Activated CD8-positive, alpha-beta T cell treated with anti-CD3 and anti-CD28 coated beads, Interleukin-2, amount 10 ng/mL, durations not matched to agents 7 days and 5 days (primary cell): ENCODE measurements at regions of chr7 and their contacts with region 1.

Region 1: DNA sequence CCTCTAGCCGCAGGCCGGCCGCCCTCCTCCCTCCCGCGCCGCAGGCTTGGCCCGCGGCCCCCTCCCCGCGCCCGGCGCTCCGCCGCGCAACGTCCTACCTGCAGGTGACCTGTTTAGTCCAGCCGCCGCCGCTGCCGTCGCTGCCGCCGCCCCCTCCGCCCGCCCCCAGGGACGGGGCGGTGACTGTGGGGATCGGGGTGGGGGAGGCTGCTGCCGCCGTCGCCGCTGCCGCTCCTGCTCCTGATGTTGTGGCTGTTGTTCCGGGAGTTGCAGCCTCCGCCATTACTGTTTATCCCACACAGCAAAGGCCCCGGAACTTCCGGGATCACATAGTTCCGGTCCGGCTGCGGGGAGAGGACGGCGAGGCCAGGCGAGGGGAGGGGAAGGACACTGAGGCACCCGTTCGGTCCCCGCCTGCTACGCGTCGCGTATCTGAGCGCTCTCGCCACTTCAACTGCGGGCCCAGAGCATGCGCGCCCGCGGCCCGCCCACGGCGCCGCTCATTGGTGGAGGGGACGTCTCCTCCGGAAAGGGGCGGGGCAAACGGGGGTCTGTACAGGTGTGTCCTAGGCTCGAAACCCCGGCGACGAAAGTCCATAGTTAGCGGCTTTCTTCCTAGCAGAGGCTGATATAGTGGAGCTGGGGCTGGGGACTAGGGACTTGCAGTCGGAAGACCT is at the start of gene MKRN1:
- DNase-seq: peak; percentile 93
- ATAC-seq: peak; percentile 93
- H3K4me3 Mint-ChIP-seq: peak within 1 kb of the TSS; percentile 98
- H3K27ac Mint-ChIP-seq: peak within 1 kb of the TSS; percentile 98
- H3K4me1 Mint-ChIP-seq: peaks cover 32% of the 10 kb centered on the region
- H3K27me3 Mint-ChIP-seq: peaks cover 10% of the 10 kb centered on the region
- total RNA-seq, gene MKRN1: 51.5 to 53.9 TPM

Region 2: DNA sequence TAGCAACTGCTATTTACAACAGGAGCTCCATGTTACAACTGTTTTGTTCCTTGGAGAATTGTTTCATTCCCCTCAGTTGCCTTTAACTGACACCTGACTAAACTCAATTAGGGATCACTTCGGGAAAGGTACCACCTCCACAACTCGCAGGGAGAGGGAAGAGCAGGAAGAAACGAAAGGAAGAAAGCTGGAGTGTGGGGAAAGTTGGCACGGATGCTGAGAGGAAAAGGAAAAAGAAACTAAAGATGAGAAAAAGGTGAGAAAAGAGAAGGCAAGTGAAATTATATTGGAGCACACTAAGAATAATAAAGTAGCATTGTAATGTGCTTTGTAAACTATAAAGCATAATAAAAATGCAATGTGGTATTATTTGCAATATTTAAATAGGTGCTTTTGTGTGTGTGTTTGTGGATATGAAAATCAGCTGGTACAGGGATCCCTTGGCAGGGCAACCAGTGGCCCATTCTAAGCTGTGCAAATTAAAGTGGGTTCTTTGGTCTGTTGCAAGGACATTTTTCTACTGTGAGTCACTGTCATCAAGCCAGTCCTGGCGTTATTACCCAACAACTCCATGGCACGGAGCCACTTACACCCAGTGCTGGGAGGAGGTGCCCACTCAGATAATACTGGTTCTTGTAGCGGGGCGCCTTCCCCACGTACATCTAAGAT is 747.3 kb before region 1 on chr7:
- CTCF ChIA-PET with region 1: no interaction called
- POLR2A ChIA-PET with region 1: no interaction called
- DNase-seq: no peak
- ATAC-seq: no peak
- H3K4me3 Mint-ChIP-seq: no peak overlapping the region
- H3K27ac Mint-ChIP-seq: no peak overlapping the region
- H3K4me1 Mint-ChIP-seq: peaks cover 31% of the 10 kb centered on the region
- H3K27me3 Mint-ChIP-seq: no peaks in the 10 kb centered on the region

Region 3: DNA sequence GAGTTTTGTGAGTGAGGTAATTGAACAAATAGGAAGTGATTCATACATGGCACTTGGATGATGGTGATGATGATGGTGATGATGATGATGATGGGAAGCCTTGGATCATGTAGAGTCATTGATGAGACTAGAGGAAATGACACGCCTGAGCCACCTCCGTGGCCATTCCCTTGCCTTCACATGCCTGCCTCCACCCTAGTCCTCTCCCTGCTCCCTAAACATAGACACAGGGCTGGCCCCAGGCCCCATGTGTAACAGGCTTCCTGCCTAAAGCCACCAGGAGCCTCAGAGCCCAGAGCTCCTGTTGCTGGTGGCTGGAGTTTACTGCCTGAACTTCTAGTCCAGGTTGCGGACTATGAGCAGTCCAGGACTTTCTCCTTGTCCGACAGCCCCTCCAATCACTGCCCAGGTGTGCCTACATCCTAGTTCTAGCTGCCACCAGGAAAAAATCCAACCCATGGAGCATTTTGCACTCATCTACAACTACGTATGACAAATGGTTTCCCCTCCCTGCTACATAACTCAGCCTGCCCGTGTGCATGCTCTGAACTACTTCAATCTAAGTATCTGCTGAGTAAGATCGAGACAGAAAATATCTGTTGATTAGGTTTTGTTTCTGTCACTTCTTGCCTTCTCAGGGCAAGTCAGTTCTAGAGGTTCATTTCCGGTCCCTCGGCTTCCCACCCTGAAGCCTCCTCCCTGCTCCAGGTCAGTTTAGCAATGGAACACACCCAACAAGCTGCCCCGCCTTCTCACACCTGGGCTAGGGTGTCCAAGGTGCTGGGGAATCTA is 266.9 kb before region 1 on chr7:
- CTCF ChIA-PET with region 1: no interaction called
- POLR2A ChIA-PET with region 1: no interaction called
- DNase-seq: peak; percentile 27
- ATAC-seq: peak; percentile 54
- H3K4me3 Mint-ChIP-seq: no peak overlapping the region
- H3K27ac Mint-ChIP-seq: peak overlapping the region; percentile 75
- H3K4me1 Mint-ChIP-seq: peaks cover 56% of the 10 kb centered on the region
- H3K27me3 Mint-ChIP-seq: no peaks in the 10 kb centered on the region

Region 4: GRCh38 chr7:140494867-140495266 is 15.7 kb after region 1 on chr7:
- CTCF ChIA-PET with region 1: interaction called, 33 read pairs
- POLR2A ChIA-PET with region 1: no interaction called
- DNase-seq: no peak
- ATAC-seq: no peak
- H3K4me3 Mint-ChIP-seq: no peak overlapping the region
- H3K27ac Mint-ChIP-seq: no peak overlapping the region
- H3K4me1 Mint-ChIP-seq: no peaks in the 10 kb centered on the region
- H3K27me3 Mint-ChIP-seq: no peaks in the 10 kb centered on the region